GM10248 (cell line): ENCODE measurements at regions of chr5 and their contacts with region 1.

Region 1: DNA sequence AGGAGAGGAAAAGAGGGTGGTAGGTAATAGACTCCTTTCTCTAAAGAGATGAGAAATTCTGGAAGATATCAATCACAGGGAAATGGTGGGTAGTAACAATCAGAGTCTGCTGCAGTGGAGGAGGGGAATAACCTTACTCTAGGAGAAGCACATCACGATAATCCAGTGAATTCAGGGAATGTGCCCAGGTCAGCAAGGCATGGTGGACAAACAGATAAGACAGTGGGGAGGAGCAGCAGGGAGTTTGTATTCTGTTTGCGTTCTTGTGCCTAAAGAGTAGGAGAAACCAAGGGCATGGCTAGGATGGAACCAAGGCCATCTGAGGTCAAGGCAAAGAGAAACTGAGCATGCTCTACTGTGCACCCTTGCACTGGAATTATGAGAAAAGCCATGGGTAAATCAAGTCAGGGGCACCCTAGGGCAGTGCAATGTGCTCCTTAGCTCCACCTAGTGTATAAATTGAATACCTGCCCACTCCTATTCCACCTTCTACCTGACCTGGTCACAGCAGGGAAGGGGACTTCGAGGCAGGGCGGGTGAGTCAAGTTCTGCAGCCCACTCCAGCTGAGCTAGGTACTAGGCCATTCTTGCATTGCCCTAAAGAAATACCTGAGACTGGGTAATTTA is 31.6 kb downstream of the RETREG1 start:
- DNase-seq: no peak
- CTCF ChIP-seq: peak; percentile 36

Region 2: DNA sequence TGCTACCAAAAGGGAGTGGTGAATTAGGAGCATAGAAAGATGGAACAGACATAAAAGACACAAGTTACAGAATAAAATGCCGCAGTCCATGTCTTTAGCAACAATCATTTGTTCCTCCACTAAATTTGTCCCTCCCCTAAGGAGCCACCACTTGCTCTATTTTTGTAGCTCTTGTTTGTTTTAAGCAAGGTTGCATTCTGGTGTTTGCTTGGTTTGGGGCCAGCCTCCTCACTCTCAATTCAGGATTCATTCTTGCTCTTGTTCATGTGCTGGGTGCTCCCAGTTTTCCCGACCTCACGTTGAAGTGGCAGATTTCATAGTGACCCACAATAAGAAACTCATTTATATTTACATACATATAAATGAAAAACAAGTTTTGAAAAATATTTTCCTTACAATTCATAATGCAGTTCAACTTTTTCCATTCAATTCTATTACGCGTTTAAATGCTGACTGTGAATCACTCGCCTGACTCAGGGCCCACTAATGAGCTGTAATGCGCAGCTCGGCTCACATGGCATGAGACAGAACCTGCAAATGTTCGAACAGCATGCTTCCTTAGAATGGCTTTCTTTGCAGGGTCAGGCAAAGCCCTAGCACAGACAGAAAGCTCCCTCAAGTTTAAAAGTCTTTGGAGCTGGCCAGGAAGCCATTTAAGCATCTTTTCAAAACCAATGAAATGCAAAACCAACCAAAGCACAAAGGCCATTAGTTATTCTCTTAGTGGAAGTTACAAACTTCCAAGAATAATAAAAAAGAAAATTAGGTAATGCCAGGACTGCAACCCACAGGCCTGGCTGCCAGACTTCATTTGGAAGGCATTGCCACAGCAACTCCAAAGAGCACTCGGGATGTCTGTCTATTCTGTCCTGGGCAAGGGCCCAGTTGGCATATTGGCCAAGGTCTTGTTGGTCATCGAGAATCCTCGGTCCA is 10.1 kb before region 1 on chr5:
- CTCF ChIA-PET with region 1: interaction called, 12 read pairs
- POLR2A ChIA-PET with region 1: no interaction called
- DNase-seq: no peak
- CTCF ChIP-seq: no peak

Region 3: GRCh38 chr5:16596581-16596940 is 11.4 kb after region 1 on chr5:
- CTCF ChIA-PET with region 1: interaction called, 12 read pairs
- POLR2A ChIA-PET with region 1: no interaction called
- DNase-seq: no peak
- CTCF ChIP-seq: no peak